GM13977 (cell line): ENCODE measurements at regions of chr1 and their contacts with region 1.

Region 1: DNA sequence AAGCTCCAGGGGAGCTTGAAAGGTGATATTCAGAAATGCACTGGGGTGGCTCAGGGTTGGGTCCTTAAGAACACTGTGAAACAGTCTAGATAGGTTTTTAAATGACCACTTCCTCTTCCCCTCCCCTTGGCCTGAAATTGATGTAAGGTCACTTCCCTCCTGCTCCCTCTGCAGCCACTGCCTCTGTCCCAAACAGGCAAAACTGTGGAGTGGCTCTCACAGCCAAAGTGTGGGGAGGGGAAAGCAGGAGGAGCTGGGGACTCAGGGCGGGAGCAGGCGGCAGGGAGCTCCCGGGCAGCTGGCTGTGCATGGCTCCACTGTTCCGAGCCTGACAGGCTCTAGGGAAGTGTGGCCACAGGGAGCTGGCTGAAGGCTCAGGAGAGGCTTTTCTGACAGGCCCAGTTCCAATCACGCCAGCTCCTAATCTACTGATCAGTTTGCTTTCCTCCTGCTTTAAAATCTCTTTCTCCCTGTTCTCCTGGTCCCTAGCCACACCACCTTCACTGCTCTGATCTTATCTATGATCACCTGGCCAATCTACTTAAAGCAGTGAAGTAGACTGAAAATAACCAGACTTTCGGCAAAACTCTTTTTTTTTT is 5.1 kb upstream of the CSRP1 start:
- DNase-seq: peak; percentile 61
- CTCF ChIP-seq: no peak

Region 2: GRCh38 chr1:201447911-201448871 is 63.8 kb before region 1 on chr1:
- in situ Hi-C with region 1: loop called (anchors 10 kb)
- DNase-seq: peak; percentile 83
- CTCF ChIP-seq: peak; percentile 86

Region 3: GRCh38 chr1:201625226-201625761 is 113.3 kb after region 1 on chr1:
- in situ Hi-C with region 1: no loop called
- DNase-seq: no peak
- CTCF ChIP-seq: no peak